Activated naive CD4-positive, alpha-beta T cell treated with anti-CD3 and anti-CD28 coated beads, Interleukin-2, amount 10 ng/mL, durations not matched to agents 7 days and 5 days (primary cell): ENCODE measurements at regions of chr15 and their contacts with region 1.

Region 1: DNA sequence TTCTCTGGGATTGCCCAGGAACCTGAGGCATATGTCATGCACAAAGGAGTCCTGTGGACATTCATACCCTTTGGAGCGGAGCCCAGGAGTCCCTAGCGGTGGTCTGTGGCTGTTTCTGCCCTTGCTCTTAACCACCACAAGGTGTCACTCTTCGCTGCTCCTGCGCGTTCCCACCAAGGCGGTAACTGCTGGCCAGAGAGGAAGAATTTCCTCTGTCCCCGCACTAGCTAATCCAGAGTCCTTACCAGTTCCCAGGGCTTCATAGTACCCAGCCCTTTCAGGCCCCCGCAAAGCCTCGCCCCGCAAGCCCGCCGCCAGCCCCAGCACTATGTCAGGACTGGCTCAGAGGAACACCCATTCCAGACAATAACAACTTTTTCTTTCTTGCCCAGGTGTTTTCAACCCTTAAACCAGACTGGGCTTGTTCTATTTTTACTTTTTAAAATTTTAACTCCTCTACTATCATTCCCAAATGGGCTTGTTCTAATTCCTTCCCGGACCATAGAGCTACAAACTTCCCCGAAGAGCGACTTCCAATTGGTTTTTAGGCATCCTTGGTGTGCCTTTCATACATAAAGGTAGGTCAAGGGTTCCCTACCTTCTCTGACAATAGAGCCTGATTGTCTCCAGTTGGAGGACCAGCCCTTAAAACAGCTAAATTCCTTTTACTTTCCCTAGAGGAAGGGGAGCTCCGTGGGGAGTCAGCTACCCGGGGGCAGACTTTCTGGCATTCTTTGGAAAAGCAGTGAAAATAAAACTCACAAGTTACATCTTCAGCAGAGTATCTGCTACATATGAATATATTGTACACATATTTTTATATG is 31.8 kb upstream of the ZNF774 start:
- DNase-seq: peak; percentile 76
- H3K4me3 Mint-ChIP-seq: no peak overlapping the region
- H3K27ac Mint-ChIP-seq: no peak overlapping the region
- H3K4me1 Mint-ChIP-seq: peaks cover 7% of the 10 kb centered on the region
- H3K27me3 Mint-ChIP-seq: peaks cover 24% of the 10 kb centered on the region

Region 2: DNA sequence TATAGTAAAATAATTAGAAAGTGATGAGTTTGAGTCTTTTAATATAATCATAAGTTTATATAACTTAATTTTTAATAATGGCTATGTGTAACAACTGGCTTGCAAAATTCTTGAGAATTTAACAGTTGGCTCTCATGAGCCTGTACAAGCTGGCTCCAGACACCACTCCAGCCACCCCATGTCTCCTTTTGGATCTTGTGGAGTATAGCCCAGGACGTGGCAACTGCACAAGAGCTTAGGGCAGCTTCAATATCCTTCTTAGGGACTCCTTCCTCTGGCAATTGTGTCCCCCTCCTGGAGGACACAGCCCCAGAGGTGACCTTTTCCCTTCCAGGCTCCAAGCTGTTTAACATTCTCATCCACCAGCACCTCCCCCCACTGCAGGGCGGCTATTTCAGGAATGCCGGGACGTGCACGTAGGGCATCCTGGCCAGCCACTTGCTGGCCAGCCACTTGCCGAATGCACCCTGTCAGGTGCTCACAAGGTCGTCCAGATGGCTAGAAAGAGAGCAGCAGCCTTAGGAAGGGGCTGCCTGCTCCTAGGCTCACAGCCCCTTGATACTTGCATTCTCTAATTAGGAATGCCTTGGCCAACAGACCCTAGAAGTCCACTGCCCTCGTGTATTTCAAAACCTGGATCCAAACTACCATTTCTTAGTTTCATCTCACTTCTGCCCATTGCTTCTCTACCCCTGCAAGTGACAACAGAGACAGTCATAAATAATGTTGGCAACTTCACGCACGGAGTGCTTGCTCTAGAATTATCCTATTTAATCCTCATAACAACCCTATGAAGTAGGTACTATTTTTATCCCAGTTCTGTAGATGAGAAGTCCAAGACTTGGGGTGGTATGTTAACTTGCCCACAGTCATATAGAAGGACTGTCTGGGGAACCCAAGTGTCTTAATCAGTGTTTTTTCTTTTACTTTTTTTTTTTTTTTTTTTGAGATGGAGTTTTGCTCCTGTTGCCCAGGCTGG is 193.5 kb before region 1 on chr15:
- CTCF ChIA-PET with region 1: no interaction called
- DNase-seq: no peak
- H3K4me3 Mint-ChIP-seq: no peak overlapping the region
- H3K27ac Mint-ChIP-seq: no peak overlapping the region
- H3K4me1 Mint-ChIP-seq: no peaks in the 10 kb centered on the region
- H3K27me3 Mint-ChIP-seq: peaks cover 21% of the 10 kb centered on the region

Region 3: GRCh38 chr15:90291679-90292356 is 28.5 kb before region 1 on chr15:
- CTCF ChIA-PET with region 1: interaction called, 18 read pairs
- DNase-seq: peak; percentile 44
- H3K4me3 Mint-ChIP-seq: no peak overlapping the region
- H3K27ac Mint-ChIP-seq: no peak overlapping the region
- H3K4me1 Mint-ChIP-seq: peaks cover 9% of the 10 kb centered on the region
- H3K27me3 Mint-ChIP-seq: peaks cover 24% of the 10 kb centered on the region

Region 4: DNA sequence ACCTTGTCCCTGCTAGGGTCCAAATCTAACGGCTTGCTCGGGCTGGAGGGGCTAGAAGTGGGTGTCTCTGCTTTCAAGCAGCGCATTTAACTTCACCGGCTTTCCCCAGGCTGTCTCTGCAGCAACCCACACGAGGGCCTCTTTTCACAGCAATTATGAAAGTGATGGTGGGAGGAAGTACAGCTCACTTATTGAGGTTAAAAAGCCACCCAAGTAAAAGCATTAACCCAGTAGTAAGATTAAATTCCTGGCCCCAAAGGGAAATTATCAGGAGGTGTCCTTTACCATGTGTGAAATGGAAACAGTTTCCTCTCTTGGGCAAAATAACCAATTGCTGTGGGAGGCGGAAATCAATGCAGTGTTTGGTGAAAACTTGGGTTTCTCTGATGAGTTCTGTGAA is 13.7 kb before region 1 on chr15:
- CTCF ChIA-PET with region 1: interaction called, 33 read pairs
- DNase-seq: peak; percentile 50
- H3K4me3 Mint-ChIP-seq: no peak overlapping the region
- H3K27ac Mint-ChIP-seq: peak overlapping the region; percentile 70
- H3K4me1 Mint-ChIP-seq: peaks cover 24% of the 10 kb centered on the region
- H3K27me3 Mint-ChIP-seq: peaks cover 6% of the 10 kb centered on the region

Region 5: GRCh38 chr15:90362936-90363212 is 42.6 kb after region 1 on chr15:
- CTCF ChIA-PET with region 1: interaction called, 32 read pairs
- DNase-seq: no peak
- H3K4me3 Mint-ChIP-seq: no peak overlapping the region
- H3K27ac Mint-ChIP-seq: no peak overlapping the region
- H3K4me1 Mint-ChIP-seq: peaks cover 29% of the 10 kb centered on the region
- H3K27me3 Mint-ChIP-seq: peaks cover 8% of the 10 kb centered on the region

Region 6: DNA sequence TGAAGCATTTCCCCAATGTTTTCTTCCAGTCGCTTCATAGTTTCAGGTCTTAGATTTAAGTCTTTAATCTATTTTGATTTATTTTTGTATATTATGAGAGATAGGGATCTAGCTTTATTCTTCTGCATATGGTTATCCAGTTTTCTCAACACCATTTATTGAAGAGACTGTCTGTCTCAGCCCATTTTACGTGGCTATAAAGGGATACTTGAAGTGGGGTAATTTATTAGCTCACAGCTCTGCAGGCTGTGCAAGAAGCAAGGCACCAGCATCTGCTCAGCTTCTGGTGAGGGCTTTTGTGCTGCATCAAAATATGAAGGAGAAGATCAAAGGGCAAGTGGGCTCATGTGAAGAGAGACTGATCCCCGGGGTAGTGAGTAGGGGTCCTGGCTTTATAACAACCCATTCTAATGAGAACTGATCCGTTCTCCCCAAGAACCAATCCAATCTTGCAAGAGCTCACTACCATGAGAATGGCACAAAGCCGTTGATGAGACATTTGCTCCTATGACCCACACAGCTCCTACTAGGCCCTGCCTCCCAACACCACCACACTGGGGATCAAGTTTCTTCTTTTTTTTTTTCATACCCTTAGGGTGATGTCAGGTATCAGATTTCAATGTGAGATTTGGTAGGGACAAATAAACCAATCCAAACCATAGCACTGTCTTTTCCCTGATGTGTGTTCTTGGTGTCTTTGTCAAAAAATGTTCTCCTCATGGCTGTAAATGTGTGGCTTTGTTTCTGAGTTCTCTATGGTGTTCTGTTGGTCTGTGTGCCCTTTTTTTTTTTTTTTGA is 131.0 kb after region 1 on chr15:
- CTCF ChIA-PET with region 1: interaction called, 20 read pairs
- DNase-seq: no peak
- H3K4me3 Mint-ChIP-seq: no peak overlapping the region
- H3K27ac Mint-ChIP-seq: no peak overlapping the region
- H3K4me1 Mint-ChIP-seq: no peaks in the 10 kb centered on the region
- H3K27me3 Mint-ChIP-seq: no peaks in the 10 kb centered on the region

Region 7: GRCh38 chr15:90500171-90500570 is 179.9 kb after region 1 on chr15:
- CTCF ChIA-PET with region 1: interaction called, 11 read pairs
- DNase-seq: no peak
- H3K4me3 Mint-ChIP-seq: no peak overlapping the region
- H3K27ac Mint-ChIP-seq: no peak overlapping the region
- H3K4me1 Mint-ChIP-seq: peaks cover 4% of the 10 kb centered on the region
- H3K27me3 Mint-ChIP-seq: no peaks in the 10 kb centered on the region